ENCODE measurements at regions of chr10 and their contacts with region 1.

Region 1: GRCh38 chr10:77111611-77112550 is 525.7 kb downstream of the KCNMA1 start:
- DNase-seq: peak; percentile 57
- H3K4me3 ChIP-seq: no peak overlapping the region
- H3K27ac ChIP-seq: no peak overlapping the region
- H3K4me1 ChIP-seq: no peaks in the 10 kb centered on the region
- H3K27me3 ChIP-seq: no peaks in the 10 kb centered on the region
- CTCF ChIP-seq: peak; percentile 82

Region 2: GRCh38 chr10:75401569-75402485 is 1710.1 kb before region 1 on chr10 and contains the start of gene ZNF503:
- CTCF ChIA-PET with region 1: no interaction called
- POLR2A ChIA-PET with region 1: no interaction called
- intact Hi-C with region 1: loop called (anchors 5 kb)
- DNase-seq: peak; percentile 94
- H3K4me3 ChIP-seq: peak within 1 kb of the TSS; percentile 57
- H3K27ac ChIP-seq: no peak within 1 kb of the TSS
- H3K4me1 ChIP-seq: peaks cover 32% of the 10 kb centered on the region
- H3K27me3 ChIP-seq: peaks cover 99% of the 10 kb centered on the region
- CTCF ChIP-seq: no peak
- total RNA-seq, gene ZNF503: 1.2 TPM in 2 replicates

Region 3: DNA sequence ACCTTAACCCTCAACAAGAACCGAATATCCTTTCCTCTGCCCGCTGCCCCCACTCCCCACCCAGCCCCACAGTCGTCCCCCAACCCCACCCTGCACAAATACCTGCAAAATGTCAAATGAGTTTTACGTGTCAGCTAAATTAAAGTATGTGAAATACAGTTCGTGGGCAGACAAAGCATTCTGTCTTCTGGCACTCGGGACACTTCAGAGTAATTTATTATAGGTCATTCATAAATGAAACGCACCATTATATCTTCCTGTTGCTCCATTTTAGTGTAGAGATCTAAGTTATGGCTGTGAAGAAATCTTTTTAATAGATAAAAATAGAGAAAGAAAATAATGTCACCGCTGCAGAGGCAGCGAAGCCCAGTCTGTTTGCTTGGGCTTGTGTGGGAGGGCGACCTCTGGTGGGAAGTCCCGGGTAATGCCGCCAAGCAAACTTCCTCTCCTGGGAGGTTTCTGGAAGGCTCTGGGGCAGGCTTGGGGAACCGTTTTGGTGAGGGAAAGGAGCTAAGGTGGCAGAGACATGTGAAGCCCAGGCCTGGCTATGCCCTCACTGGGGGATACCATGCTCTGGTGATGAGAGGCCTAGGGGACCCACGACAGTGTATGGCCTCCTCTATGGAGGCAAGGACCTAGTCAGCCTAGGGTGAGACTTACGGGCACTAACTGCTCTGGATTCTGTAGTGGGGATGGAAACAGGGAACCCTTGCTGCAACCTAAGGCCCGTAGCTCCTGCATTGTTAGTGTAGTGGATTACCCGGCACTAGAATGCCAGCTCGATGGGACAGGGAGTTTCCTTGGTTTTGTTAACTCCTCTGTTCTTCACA is 1075.6 kb before region 1 on chr10:
- CTCF ChIA-PET with region 1: no interaction called
- POLR2A ChIA-PET with region 1: no interaction called
- intact Hi-C with region 1: loop called (anchors 10 kb)
- DNase-seq: peak; percentile 55
- H3K4me3 ChIP-seq: no peak overlapping the region
- H3K27ac ChIP-seq: no peak overlapping the region
- H3K4me1 ChIP-seq: no peaks in the 10 kb centered on the region
- H3K27me3 ChIP-seq: peaks cover 7% of the 10 kb centered on the region
- CTCF ChIP-seq: peak; percentile 88

Region 4: DNA sequence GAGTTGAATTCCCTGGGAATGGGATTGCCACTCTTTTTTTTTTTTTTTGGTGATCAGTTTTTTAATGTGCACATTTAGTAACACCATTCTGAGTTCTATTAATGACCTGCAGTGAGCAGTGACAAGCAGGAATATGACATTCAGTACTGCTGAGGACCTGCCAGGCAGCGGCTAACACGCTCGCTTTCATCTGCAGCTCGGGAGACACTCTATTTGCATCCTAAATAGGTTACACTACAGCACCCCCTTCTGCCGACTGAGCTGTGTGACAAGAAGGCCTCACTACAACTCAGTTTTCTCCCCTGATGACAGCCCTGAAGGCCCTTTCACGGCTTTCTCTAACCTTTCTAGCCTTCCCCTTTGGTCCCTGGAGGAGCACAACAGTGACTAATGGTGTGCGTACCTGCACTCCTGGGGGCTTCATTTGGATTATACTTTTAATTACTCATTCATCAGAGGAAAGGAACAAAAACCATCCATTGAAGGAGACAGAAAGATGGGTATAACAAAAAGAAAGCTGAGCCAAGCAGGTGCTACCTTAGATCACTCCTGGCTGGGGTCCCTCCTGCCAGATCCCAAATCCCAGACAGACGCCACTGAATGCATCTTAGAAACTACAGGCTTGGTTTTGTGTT is 808.1 kb before region 1 on chr10:
- CTCF ChIA-PET with region 1: no interaction called
- POLR2A ChIA-PET with region 1: no interaction called
- intact Hi-C with region 1: loop called (anchors 10 kb)
- DNase-seq: peak; percentile 67
- H3K4me3 ChIP-seq: no peak overlapping the region
- H3K27ac ChIP-seq: no peak overlapping the region
- H3K4me1 ChIP-seq: peaks cover 3% of the 10 kb centered on the region
- H3K27me3 ChIP-seq: no peaks in the 10 kb centered on the region
- CTCF ChIP-seq: peak; percentile 65

Region 5: DNA sequence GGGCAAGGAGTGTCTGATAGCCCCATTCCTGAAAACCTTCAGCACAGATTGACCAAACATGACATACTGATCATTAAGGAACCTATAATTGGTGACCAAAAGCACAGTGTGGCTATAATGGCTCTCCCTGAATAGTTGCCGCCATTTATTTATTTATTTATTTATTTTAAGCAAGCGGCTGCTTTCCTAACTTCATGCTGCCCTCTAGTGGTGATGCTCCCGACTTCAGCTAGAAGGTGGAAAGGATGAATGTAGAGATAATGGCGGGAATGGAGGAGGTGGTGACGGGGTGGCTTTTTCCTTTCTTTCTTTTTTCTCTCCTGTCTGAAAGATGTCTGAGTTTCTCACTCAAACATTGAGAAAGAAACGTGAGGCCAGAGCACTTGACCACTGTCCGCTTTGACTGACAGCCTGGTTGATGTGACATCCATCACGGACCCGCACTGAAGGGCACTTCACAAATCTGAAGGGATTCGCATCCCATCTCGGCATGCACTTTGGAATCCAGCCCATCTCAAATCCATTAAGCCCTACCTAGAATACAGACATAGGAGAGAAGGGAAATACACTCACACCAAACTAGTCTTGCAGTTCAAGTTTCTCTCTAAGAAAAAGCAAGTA is 564.4 kb before region 1 on chr10:
- CTCF ChIA-PET with region 1: no interaction called
- POLR2A ChIA-PET with region 1: no interaction called
- intact Hi-C with region 1: loop called (anchors 5 kb)
- DNase-seq: peak; percentile 83
- H3K4me3 ChIP-seq: no peak overlapping the region
- H3K27ac ChIP-seq: no peak overlapping the region
- H3K4me1 ChIP-seq: no peaks in the 10 kb centered on the region
- H3K27me3 ChIP-seq: no peaks in the 10 kb centered on the region
- CTCF ChIP-seq: peak; percentile 84

Region 6: GRCh38 chr10:76984559-76985443 is 127.1 kb before region 1 on chr10:
- CTCF ChIA-PET with region 1: no interaction called
- POLR2A ChIA-PET with region 1: no interaction called
- intact Hi-C with region 1: loop called (anchors 2 kb)
- DNase-seq: peak; percentile 72
- H3K4me3 ChIP-seq: no peak overlapping the region
- H3K27ac ChIP-seq: no peak overlapping the region
- H3K4me1 ChIP-seq: peaks cover 16% of the 10 kb centered on the region
- H3K27me3 ChIP-seq: no peaks in the 10 kb centered on the region
- CTCF ChIP-seq: peak; percentile 94

Region 7: DNA sequence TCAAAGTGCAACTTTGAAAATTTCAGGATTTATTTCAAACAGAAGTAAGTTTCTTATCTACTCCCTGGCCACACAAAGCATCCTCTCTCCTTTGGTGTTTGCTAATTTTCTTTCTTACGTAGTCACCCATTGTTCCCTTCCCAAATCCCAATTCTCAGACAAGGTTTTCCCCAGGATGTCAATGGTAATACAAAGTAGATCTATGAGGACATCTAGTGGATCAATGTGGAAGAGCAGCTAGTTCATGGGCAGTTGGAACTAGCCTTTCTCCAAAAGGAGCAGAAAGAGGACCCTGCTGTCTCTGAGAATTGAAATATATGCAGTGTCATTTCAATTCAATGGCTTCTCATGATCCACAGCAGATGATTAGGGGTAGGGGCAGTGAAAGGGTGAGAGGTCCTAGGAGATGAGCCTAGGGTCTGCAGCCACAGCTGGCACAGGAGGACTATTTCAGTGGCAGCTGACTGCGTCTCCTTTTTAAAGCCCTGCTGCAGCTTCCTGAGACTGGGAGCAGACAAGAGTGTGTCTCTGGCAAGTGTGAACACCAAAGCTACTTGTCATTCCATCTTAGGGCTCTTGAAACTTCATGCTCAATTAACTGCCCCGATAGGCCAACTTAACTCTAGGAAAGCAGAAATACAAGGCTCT is 106.8 kb before region 1 on chr10:
- CTCF ChIA-PET with region 1: no interaction called
- POLR2A ChIA-PET with region 1: no interaction called
- intact Hi-C with region 1: loop called (anchors 5 kb)
- DNase-seq: peak; percentile 70
- H3K4me3 ChIP-seq: no peak overlapping the region
- H3K27ac ChIP-seq: no peak overlapping the region
- H3K4me1 ChIP-seq: no peaks in the 10 kb centered on the region
- H3K27me3 ChIP-seq: peaks cover 17% of the 10 kb centered on the region
- CTCF ChIP-seq: peak; percentile 83

Region 8: GRCh38 chr10:77513781-77514331 is 402.0 kb after region 1 on chr10:
- CTCF ChIA-PET with region 1: no interaction called
- POLR2A ChIA-PET with region 1: no interaction called
- intact Hi-C with region 1: no loop called
- DNase-seq: no peak
- H3K4me3 ChIP-seq: no peak overlapping the region
- H3K27ac ChIP-seq: no peak overlapping the region
- H3K4me1 ChIP-seq: no peaks in the 10 kb centered on the region
- H3K27me3 ChIP-seq: no peaks in the 10 kb centered on the region
- CTCF ChIP-seq: no peak

Measured in A673 (cell line).